CD8-positive, alpha-beta T cell (primary cell): ENCODE measurements at regions of chr7 and their contacts with region 1.

Region 1: DNA sequence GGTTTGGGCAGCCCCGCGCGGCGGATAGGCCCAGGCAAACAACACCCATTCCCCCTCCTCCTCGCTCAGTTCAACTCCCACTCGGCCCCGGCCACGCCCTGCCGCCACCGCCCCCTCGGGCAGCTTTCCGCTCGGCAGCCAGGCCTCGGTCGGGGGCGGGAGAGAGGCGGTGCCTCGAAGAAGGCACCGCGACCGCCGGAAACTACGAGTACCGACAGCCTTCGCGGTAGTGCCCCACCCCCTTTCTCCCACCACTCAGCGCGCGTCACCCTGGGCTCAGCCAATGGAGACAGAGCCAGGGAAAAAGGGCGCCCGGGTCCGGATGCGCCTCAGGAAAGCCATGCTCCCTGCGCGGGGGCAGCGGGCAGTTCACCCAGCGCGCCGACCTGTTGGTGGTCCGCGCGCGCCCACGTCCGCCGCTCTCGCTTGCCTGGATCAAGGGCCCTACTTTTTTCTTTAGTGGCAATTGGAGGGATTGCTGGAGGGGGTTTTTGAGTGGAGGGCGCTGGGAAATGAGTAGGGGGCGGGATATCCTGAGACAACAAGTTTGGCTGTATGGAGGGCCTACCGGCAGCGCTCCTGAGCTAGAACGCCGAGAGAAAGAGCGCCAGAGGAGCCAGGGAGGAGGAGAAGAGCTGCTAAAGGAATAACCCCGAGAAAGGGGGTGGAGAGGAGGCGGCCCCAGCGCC is 557 bp upstream of the SP4 start:
- DNase-seq: peak; percentile 99 to 100 (median 99)
- ATAC-seq: peak; percentile 76
- H3K4me3 ChIP-seq: peak overlapping the region; percentile 87 to 99
- H3K4me3 Mint-ChIP-seq: peak overlapping the region; percentile 96
- H3K27ac ChIP-seq: peak overlapping the region; percentile 96 to 97
- H3K27ac Mint-ChIP-seq: peak overlapping the region; percentile 98
- H3K4me1 ChIP-seq: peaks cover 42% of the 10 kb centered on the region
- H3K4me1 Mint-ChIP-seq: peaks cover 48% of the 10 kb centered on the region
- H3K27me3 ChIP-seq: no peaks in the 10 kb centered on the region
- H3K27me3 Mint-ChIP-seq: no peaks in the 10 kb centered on the region
- CTCF ChIP-seq: no peak

Region 2: GRCh38 chr7:20700453-20701227 is 726.7 kb before region 1 on chr7:
- CTCF ChIA-PET with region 1: no interaction called
- POLR2A ChIA-PET with region 1: no interaction called
- intact Hi-C with region 1: no loop called
- DNase-seq: no peak
- ATAC-seq: no peak
- H3K4me3 ChIP-seq: no peak overlapping the region
- H3K4me3 Mint-ChIP-seq: no peak overlapping the region
- H3K27ac ChIP-seq: no peak overlapping the region
- H3K27ac Mint-ChIP-seq: no peak overlapping the region
- H3K4me1 ChIP-seq: no peaks in the 10 kb centered on the region
- H3K4me1 Mint-ChIP-seq: no peaks in the 10 kb centered on the region
- H3K27me3 ChIP-seq: no peaks in the 10 kb centered on the region
- H3K27me3 Mint-ChIP-seq: peaks cover 2% of the 10 kb centered on the region
- CTCF ChIP-seq: no peak

Region 3: DNA sequence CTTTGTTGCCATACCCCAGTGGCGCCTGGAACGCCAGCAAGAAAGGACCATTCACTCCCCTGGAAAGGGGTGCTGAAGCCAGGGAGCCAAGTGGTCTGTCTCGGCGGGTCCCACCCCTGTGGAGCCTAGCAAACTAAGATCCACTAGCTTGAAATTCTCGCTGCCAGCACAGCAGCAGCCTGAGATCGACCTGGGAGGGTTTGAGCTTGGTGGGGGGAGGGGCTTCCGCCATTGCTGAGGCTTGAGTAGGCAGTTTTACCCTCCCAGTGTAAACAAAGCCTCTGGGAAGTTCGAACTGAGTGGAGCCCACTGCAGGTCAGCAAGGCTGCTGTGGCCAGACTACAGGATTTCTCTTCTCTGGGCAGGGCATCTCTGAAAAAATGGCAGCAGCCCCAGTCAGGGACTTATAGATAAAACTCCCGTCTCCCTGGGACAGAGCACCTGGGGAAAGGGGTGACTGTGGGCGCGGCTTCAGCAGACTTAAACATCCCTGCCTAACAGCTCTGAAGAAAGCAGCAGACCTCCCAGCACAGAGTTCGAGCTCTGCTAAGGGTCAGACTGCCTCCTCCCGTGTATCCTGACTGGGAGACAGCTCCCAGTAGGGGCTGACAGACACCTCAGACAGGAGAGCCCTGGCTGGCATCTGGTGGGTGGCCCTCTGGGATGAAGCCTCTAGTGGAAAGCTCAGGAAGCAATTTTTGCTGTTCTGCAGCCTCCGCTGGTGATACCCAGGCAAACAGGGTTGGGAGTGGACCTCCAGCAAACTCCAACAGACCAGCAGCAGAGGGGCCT is 280.5 kb before region 1 on chr7:
- CTCF ChIA-PET with region 1: no interaction called
- POLR2A ChIA-PET with region 1: no interaction called
- intact Hi-C with region 1: no loop called
- DNase-seq: no peak
- ATAC-seq: no peak
- H3K4me3 ChIP-seq: no peak overlapping the region
- H3K4me3 Mint-ChIP-seq: no peak overlapping the region
- H3K27ac ChIP-seq: no peak overlapping the region
- H3K27ac Mint-ChIP-seq: no peak overlapping the region
- H3K4me1 ChIP-seq: no peaks in the 10 kb centered on the region
- H3K4me1 Mint-ChIP-seq: no peaks in the 10 kb centered on the region
- H3K27me3 ChIP-seq: no peaks in the 10 kb centered on the region
- H3K27me3 Mint-ChIP-seq: peaks cover 6% of the 10 kb centered on the region
- CTCF ChIP-seq: no peak

Region 4: DNA sequence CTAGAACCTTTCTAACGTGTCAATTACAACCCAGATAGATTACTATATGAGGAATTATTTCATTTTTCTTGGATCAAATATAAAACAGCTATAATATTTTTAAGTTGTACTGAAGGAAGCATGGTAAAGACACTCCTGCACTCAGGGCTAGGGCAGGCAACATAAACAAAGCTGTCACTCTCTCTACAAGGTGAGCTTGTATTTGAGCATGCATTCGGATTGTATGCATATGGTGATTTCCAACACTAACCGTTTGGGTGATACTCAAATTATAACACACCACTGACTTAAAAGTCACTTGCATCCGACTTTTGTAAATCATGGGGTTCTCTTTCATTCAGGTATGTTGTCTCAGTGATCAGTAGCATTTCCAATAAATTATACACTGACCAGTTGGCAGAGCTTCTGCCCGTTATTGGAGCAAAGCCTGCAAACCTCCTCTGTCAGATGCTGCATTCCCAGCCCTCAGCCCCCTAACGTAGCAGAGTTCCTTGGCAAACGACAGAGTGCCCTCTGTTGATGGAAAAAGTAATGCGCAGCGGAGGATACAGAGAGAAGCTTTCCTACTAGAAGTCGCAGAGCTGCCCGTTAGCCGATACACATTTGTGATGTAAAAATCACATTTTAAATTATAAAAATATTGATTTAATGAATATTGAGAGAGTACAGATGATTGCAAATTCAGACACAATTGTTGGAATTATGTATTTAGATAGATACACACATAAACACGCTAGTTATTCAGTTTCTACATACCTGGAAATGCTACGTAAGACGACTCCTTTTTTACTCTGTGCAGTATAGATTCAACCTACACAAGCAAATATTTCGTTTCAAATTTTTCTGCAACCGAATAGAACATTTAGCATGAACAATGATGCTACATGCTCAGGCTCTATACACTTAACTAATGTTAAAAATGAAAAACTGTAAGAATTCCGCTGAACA is 173.3 kb before region 1 on chr7:
- CTCF ChIA-PET with region 1: interaction called, 3 read pairs
- POLR2A ChIA-PET with region 1: interaction called, 3 read pairs
- intact Hi-C with region 1: loop called in 1 of 2 experiments (anchors 5 kb)
- DNase-seq: peak in 6 of 9 experiments; percentile 15 to 60 (median 46)
- ATAC-seq: peak; percentile 49
- H3K4me3 ChIP-seq: no peak overlapping the region
- H3K4me3 Mint-ChIP-seq: peak overlapping the region; percentile 30
- H3K27ac ChIP-seq: no peak overlapping the region
- H3K27ac Mint-ChIP-seq: no peak overlapping the region
- H3K4me1 ChIP-seq: no peaks in the 10 kb centered on the region
- H3K4me1 Mint-ChIP-seq: peaks cover 6% of the 10 kb centered on the region
- H3K27me3 ChIP-seq: peaks cover 12 to 13% of the 10 kb centered on the region in 2 experiments
- H3K27me3 Mint-ChIP-seq: peaks cover 56% of the 10 kb centered on the region
- CTCF ChIP-seq: peak; percentile 42

Region 5: GRCh38 chr7:21338728-21339164 is 88.6 kb before region 1 on chr7:
- CTCF ChIA-PET with region 1: interaction called, 4 read pairs
- POLR2A ChIA-PET with region 1: interaction called, 5 read pairs
- intact Hi-C with region 1: loop called in 1 of 2 experiments (anchors 5 kb)
- DNase-seq: peak in 7 of 9 experiments; percentile 13 to 76 (median 46)
- ATAC-seq: peak; percentile 82
- H3K4me3 ChIP-seq: no peak overlapping the region
- H3K4me3 Mint-ChIP-seq: peak overlapping the region; percentile 38
- H3K27ac ChIP-seq: peak overlapping the region in 1 of 2 experiments; percentile 67
- H3K27ac Mint-ChIP-seq: peak overlapping the region; percentile 85
- H3K4me1 ChIP-seq: peaks cover 12% of the 10 kb centered on the region
- H3K4me1 Mint-ChIP-seq: peaks cover 15% of the 10 kb centered on the region
- H3K27me3 ChIP-seq: no peaks in the 10 kb centered on the region
- H3K27me3 Mint-ChIP-seq: no peaks in the 10 kb centered on the region
- CTCF ChIP-seq: no peak

Region 6: DNA sequence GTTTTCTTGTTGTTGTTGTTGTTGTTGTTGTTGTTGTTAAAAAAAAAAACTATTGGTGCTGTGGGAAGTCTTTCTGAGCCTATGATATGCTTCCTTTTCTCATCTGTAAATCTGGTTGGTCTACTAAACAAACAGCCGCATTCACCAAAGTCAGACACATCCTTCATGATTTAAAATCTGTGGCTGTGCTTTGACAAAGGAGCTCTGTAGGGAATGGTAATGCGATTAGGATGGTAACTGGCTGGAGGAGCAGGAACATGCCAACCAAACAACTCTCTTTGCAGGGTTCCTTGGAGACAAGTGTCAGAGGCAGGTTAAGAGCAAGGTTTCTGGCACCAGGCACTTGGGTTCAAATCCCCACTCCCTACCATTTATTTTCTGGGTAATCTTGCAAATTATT is 14.4 kb before region 1 on chr7:
- CTCF ChIA-PET with region 1: no interaction called
- POLR2A ChIA-PET with region 1: interaction called, 8 read pairs
- intact Hi-C with region 1: loop called in 1 of 2 experiments (anchors 1 kb)
- DNase-seq: peak in 1 of 9 experiments; percentile 21
- ATAC-seq: no peak
- H3K4me3 ChIP-seq: no peak overlapping the region
- H3K4me3 Mint-ChIP-seq: peak overlapping the region; percentile 1
- H3K27ac ChIP-seq: peak overlapping the region in 1 of 2 experiments; percentile 67
- H3K27ac Mint-ChIP-seq: peak overlapping the region; percentile 16
- H3K4me1 ChIP-seq: peaks cover 7% of the 10 kb centered on the region
- H3K4me1 Mint-ChIP-seq: peaks cover 31% of the 10 kb centered on the region
- H3K27me3 ChIP-seq: no peaks in the 10 kb centered on the region
- H3K27me3 Mint-ChIP-seq: no peaks in the 10 kb centered on the region
- CTCF ChIP-seq: no peak

Region 7: GRCh38 chr7:21945454-21946227 is 518.3 kb after region 1 on chr7 and contains the start of gene CDCA7L:
- CTCF ChIA-PET with region 1: no interaction called
- POLR2A ChIA-PET with region 1: interaction called, 3 read pairs
- intact Hi-C with region 1: loop called (anchors 1 to 5 kb)
- DNase-seq: peak; percentile 6 to 73 (median 47)
- ATAC-seq: peak; percentile 80
- H3K4me3 ChIP-seq: peak within 1 kb of the TSS; percentile 62 to 72
- H3K4me3 Mint-ChIP-seq: peak within 1 kb of the TSS; percentile 88
- H3K27ac ChIP-seq: peak within 1 kb of the TSS in 1 of 2 experiments; percentile 38
- H3K27ac Mint-ChIP-seq: peak within 1 kb of the TSS; percentile 63
- H3K4me1 ChIP-seq: peaks cover 15% of the 10 kb centered on the region
- H3K4me1 Mint-ChIP-seq: peaks cover 55% of the 10 kb centered on the region
- H3K27me3 ChIP-seq: peaks cover 0 to 2% of the 10 kb centered on the region in 2 experiments
- H3K27me3 Mint-ChIP-seq: peaks cover 3% of the 10 kb centered on the region
- CTCF ChIP-seq: no peak
- total RNA-seq, gene CDCA7L: 18.4 to 24.7 TPM

Region 8: GRCh38 chr7:22854158-22855048 is 1427.1 kb after region 1 on chr7:
- CTCF ChIA-PET with region 1: no interaction called
- POLR2A ChIA-PET with region 1: no interaction called
- intact Hi-C with region 1: no loop called
- DNase-seq: peak in 8 of 9 experiments; percentile 58 to 89 (median 76)
- ATAC-seq: peak; percentile 79
- H3K4me3 ChIP-seq: peak overlapping the region; percentile 82 to 94
- H3K4me3 Mint-ChIP-seq: peak overlapping the region; percentile 93
- H3K27ac ChIP-seq: peak overlapping the region; percentile 64 to 81
- H3K27ac Mint-ChIP-seq: peak overlapping the region; percentile 93
- H3K4me1 ChIP-seq: peaks cover 11% of the 10 kb centered on the region
- H3K4me1 Mint-ChIP-seq: peaks cover 23% of the 10 kb centered on the region
- H3K27me3 ChIP-seq: no peaks in the 10 kb centered on the region
- H3K27me3 Mint-ChIP-seq: no peaks in the 10 kb centered on the region
- CTCF ChIP-seq: peak; percentile 65

Region 9: GRCh38 chr7:23013715-23014649 is 1586.7 kb after region 1 on chr7 and contains the start of gene HYCC1:
- CTCF ChIA-PET with region 1: no interaction called
- POLR2A ChIA-PET with region 1: no interaction called
- intact Hi-C with region 1: loop called in 1 of 2 experiments (anchors 5 kb)
- DNase-seq: peak; percentile 97 to 99 (median 99)
- ATAC-seq: peak; percentile 97
- H3K4me3 ChIP-seq: peak within 1 kb of the TSS; percentile 65 to 95
- H3K4me3 Mint-ChIP-seq: peak within 1 kb of the TSS; percentile 97
- H3K27ac ChIP-seq: peak within 1 kb of the TSS; percentile 48 to 63
- H3K27ac Mint-ChIP-seq: peak within 1 kb of the TSS; percentile 89
- H3K4me1 ChIP-seq: peaks cover 21% of the 10 kb centered on the region
- H3K4me1 Mint-ChIP-seq: peaks cover 20% of the 10 kb centered on the region
- H3K27me3 ChIP-seq: no peaks in the 10 kb centered on the region
- H3K27me3 Mint-ChIP-seq: peaks cover 3% of the 10 kb centered on the region
- CTCF ChIP-seq: peak; percentile 60
- total RNA-seq, gene HYCC1: 10.7 to 13.5 TPM

Region 10: GRCh38 chr7:23181684-23182553 is 1754.6 kb after region 1 on chr7 and contains the start of gene NUP42:
- CTCF ChIA-PET with region 1: no interaction called
- POLR2A ChIA-PET with region 1: no interaction called
- intact Hi-C with region 1: loop called in 1 of 2 experiments (anchors 5 kb)
- DNase-seq: peak; percentile 89 to 98 (median 95)
- ATAC-seq: peak; percentile 90
- H3K4me3 ChIP-seq: peak within 1 kb of the TSS; percentile 77 to 84
- H3K4me3 Mint-ChIP-seq: peak within 1 kb of the TSS; percentile 100
- H3K27ac ChIP-seq: peak within 1 kb of the TSS; percentile 86 to 91
- H3K27ac Mint-ChIP-seq: peak within 1 kb of the TSS; percentile 100
- H3K4me1 ChIP-seq: peaks cover 30% of the 10 kb centered on the region
- H3K4me1 Mint-ChIP-seq: peaks cover 39% of the 10 kb centered on the region
- H3K27me3 ChIP-seq: no peaks in the 10 kb centered on the region
- H3K27me3 Mint-ChIP-seq: no peaks in the 10 kb centered on the region
- CTCF ChIP-seq: no peak
- total RNA-seq, gene NUP42: 17.3 to 20.4 TPM